ENCODE measurements at regions of chr1 and their contacts with region 1.

Region 1: DNA sequence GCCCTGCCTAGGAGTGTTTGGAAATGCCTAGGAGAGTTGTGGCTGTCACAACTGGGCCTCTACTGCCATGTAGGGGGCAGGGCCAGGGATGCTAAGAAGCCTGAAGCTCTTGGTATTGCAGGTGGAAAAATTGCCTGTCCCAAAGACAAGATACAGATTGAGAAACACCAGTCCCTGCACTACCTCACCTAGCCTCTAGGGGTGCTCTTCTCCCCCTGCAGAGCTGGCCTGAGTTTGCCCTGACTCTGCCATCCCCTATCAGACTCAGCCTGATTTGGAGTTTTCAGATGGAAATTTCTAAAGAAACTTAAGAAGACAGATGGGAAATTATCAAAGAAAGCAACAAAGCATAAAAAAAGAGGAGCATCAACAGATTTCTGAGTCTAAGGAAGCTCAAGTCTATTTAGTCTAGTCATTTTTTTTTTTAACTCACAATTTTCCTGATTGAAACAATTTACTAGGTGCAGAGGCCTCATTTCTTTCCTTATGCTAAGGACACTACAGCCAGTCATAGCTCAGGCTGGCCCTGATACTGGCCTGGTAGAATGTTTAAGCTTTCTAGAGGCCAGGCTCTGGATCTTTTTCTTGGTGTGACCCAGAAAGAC is 61.4 kb upstream of the LRRN2 start:
- DNase-seq: peak; percentile 65
- ATAC-seq: peak; percentile 88
- H3K4me3 Mint-ChIP-seq: no peak overlapping the region
- H3K27ac Mint-ChIP-seq: no peak overlapping the region
- H3K4me1 Mint-ChIP-seq: no peaks in the 10 kb centered on the region
- H3K27me3 Mint-ChIP-seq: peaks cover 18% of the 10 kb centered on the region

Region 2: GRCh38 chr1:204731509-204731908 is 15.4 kb before region 1 on chr1:
- CTCF ChIA-PET with region 1: interaction called, 10 read pairs
- POLR2A ChIA-PET with region 1: no interaction called
- DNase-seq: no peak
- ATAC-seq: no peak
- H3K4me3 Mint-ChIP-seq: no peak overlapping the region
- H3K27ac Mint-ChIP-seq: no peak overlapping the region
- H3K4me1 Mint-ChIP-seq: no peaks in the 10 kb centered on the region
- H3K27me3 Mint-ChIP-seq: peaks cover 24% of the 10 kb centered on the region

Region 3: DNA sequence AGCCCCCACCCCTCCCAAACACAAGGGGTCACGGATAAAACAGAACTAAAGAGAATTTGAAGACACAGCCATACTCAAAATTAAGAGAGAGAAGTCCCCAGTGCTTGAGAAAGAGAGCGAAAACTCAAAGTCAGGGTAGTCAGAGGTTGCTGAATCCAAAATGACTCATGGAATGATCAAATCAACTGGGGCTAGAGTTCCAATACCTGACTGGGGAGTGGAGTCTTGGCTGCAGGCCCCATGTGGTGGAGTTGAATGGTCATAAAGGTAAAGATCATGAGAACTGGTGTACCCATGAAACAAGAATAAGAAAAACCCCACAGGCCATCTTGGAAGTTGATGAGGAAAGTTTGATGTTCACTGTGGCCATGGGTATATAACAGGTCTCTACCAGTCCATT is 23.1 kb after region 1 on chr1:
- CTCF ChIA-PET with region 1: interaction called, 10 read pairs
- POLR2A ChIA-PET with region 1: no interaction called
- DNase-seq: no peak
- ATAC-seq: no peak
- H3K4me3 Mint-ChIP-seq: no peak overlapping the region
- H3K27ac Mint-ChIP-seq: no peak overlapping the region
- H3K4me1 Mint-ChIP-seq: no peaks in the 10 kb centered on the region
- H3K27me3 Mint-ChIP-seq: peaks cover 56% of the 10 kb centered on the region

Region 4: DNA sequence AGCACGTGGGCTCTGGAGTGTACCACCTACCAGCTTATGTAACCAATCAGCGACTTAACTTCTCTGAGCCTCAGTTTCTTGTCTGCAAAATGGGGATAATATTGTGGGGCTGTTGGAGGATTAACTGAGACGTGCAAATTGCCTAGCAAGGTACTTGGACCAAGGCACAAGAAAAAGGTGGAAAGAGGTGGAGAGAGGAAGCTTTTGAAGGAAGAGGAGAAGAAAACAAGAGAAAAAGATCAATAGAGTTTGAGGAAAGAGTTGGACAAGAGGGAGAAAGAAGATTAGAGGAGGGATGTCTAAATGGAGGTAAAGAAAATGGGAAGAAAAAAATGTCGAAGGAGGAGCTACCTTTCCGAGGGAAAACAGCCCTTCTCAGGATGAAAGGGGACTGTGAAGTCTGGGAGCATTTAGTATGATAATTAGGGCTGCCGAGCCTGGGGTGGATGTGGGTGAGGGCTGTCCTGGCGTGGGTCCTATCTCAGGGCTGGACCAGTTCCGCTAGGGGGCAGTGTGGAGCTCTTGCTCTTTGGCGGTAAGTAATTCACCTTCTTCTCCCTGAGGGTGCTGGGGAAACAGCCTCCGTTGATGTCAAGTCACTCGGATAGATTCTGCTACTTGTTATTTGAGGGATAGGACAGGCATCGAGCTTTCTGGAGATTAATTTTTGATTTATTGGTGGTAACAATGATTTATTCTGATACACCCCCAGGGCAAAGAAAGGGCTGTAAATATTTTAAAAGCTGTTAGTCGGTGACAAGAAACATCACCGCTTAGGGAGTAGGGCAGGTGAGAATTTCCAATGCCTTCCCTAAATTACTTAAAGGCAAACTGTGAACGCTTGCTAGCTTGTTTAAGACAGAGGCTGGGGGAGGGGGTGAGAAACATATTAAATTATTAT is 44.8 kb after region 1 on chr1:
- CTCF ChIA-PET with region 1: interaction called, 11 read pairs
- POLR2A ChIA-PET with region 1: no interaction called
- DNase-seq: peak; percentile 88
- ATAC-seq: peak; percentile 98
- H3K4me3 Mint-ChIP-seq: no peak overlapping the region
- H3K27ac Mint-ChIP-seq: no peak overlapping the region
- H3K4me1 Mint-ChIP-seq: peaks cover 2% of the 10 kb centered on the region
- H3K27me3 Mint-ChIP-seq: peaks cover 26% of the 10 kb centered on the region